Posterior vena cava (tissue), 2 donors: ENCODE measurements at regions of chr2 and their contacts with region 1.

Region 1: DNA sequence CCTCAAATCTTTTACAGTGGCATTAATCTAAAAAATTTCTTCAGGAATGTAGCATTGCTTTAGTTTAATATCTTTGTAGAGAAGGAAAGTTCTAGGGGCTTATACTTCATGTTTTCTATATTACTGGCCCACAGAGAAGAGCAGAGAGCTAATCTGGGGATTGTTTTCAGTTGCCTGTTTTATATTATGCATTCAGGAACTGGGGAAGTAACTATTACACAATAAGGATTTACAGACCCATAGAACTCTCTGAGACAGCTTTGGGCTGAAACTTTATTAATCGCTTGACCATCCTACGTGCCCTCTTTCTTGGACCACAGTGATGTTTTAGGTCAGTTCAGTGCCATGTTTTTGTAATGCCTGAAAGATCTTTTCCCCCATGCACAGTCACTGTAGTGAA is 29.9 kb downstream of the BIRC6 start:
- DNase-seq: no peak

Region 2: GRCh38 chr2:33652830-33653229 is 1266.1 kb after region 1 on chr2:
- intact Hi-C with region 1: loop called in 1 of 2 experiments (anchors 5 kb)
- DNase-seq: no peak